Motor neuron (in vitro differentiated cells): ENCODE measurements at regions of chr11 and their contacts with region 1.

Region 1: DNA sequence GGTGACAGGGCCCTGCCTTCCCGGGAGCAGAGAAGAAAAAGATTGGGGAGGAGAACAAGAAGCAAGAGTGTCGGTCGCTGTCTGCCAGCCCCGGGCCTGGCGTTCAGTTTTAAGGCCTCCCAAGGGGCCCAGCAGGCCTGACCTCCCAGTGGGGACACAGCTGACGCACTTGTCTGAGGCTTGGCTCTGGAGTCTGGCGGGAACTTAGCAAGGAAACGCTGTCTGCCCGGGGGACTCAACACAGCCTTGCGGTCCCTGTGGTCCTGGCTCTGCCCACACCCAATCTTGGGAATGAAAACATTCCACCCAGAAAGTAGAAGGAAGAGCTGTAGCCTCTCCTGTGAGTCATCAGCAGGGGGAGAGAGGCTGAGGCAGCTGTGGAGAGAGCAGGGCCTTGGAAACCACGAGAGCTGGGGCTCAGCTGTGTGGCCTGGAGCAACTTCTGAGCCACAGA is 54.4 kb downstream of the TRAF6 start:
- ATAC-seq: peak; percentile 57 to 98 (median 76)
- H3K4me3 ChIP-seq: no peak overlapping the region
- H3K27ac ChIP-seq: peak overlapping the region; percentile 63 to 80
- H3K4me1 ChIP-seq: peaks cover 20 to 21% of the 10 kb centered on the region in 2 donors

Region 2: DNA sequence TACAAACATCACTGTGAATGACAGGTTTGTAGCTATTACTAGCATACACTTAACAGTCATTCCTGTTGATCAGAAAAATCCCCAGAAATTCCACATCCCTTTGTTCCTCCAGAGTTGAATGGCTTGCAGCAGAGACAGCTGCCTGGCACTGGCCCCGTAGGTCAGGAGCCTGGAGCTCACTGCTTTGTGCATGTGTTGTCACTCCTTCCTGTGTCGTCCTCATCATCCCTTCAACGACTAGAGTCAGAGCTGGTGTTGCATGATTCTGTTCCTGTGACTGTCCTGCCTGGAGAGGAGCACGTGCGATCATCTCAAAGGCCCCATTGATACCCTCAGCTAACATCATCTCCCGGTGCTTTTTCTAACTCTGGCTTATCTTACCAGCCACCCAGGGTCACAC is 453.5 kb before region 1 on chr11:
- in situ Hi-C with region 1: no loop called
- ATAC-seq: peak in 5 of 8 experiments; percentile 66 to 89 (median 84)
- H3K4me3 ChIP-seq: no peak overlapping the region
- H3K27ac ChIP-seq: peak overlapping the region in 1 of 2 donors; percentile 23
- H3K4me1 ChIP-seq: peaks cover 18 to 35% of the 10 kb centered on the region in 2 donors

Region 3: GRCh38 chr11:36306888-36307287 is 148.8 kb before region 1 on chr11:
- in situ Hi-C with region 1: loop called in 1 of 9 experiments (anchors 25 kb)
- ATAC-seq: peak in 1 of 8 experiments; percentile 42
- H3K4me3 ChIP-seq: no peak overlapping the region
- H3K27ac ChIP-seq: no peak overlapping the region
- H3K4me1 ChIP-seq: no peaks in the 10 kb centered on the region